ENCODE measurements at regions of chr21 and their contacts with region 1.

Region 1: DNA sequence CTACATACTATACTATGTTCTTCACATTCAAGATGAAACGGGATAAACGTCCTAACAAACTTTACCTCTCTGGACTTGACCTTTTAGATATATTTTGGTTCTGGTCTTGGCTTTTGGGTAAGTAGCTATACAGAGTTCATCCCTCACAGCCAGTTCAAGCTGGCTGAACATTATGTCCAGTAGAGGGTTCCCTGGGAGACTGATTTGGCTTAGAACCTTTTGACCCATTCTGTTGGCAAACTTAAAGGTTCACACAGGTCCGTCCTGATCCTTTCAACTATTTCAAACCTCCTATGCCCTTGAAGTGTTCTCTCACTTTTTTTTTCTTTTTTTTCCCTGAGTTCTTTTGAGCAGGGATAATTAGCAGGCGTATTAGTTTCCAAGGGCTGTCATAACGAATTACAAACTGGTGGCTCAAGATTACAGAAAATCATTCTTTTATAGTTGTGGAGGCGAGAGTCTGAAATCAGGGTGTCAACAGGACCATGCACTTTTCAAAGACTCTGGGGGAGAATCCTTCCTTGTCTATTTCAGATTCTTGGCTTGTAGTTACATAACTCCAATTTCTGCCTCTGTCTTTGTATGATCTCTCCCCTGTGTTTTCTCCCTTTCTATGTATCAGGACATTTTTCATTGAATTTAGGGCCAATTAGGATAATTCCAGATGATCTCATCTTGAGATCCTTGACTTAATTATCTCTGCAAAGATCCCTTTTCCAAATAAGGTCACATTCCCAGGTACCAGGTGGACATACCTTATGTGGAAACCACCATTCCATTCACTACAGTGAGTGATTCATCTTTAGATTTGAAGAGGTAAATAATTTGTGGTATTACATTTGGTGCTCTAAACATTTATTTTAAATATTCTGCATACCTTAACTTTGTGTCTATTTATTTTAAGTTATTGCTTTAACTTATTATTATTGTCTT is 257.4 kb upstream of the USP25 start:
- DNase-seq: no peak
- H3K4me3 ChIP-seq: no peak overlapping the region
- H3K27ac ChIP-seq: no peak overlapping the region
- H3K27me3 ChIP-seq: no peaks in the 10 kb centered on the region
- CTCF ChIP-seq: no peak

Region 2: GRCh38 chr21:14591882-14592281 is 880.5 kb before region 1 on chr21:
- CTCF ChIA-PET with region 1: interaction called, 10 read pairs
- POLR2A ChIA-PET with region 1: no interaction called
- DNase-seq: no peak
- H3K4me3 ChIP-seq: no peak overlapping the region
- H3K27ac ChIP-seq: no peak overlapping the region
- H3K27me3 ChIP-seq: no peaks in the 10 kb centered on the region
- CTCF ChIP-seq: no peak

Region 3: GRCh38 chr21:15192243-15192642 is 280.1 kb before region 1 on chr21:
- CTCF ChIA-PET with region 1: no interaction called
- POLR2A ChIA-PET with region 1: no interaction called
- DNase-seq: no peak
- H3K4me3 ChIP-seq: no peak overlapping the region
- H3K27ac ChIP-seq: no peak overlapping the region
- H3K27me3 ChIP-seq: no peaks in the 10 kb centered on the region
- CTCF ChIP-seq: no peak

Region 4: DNA sequence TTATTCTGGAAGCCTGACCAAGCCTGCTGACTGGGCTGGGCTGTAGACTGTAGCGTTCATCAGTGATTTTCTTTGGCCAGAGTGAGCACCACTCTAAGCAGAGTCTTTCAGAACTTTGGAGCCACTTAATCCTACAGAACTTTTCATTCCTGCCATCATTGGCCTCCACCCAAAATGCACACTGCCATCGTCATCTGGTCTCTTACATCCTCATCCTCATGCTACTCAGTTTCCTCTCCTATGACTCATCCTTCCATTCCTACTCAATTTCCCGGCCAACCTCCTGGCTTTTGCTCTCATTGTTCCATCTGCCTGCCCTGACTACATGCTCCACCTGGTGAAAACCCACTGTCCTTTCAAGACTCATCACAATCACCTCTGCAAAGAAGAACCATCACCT is 23.6 kb after region 1 on chr21:
- CTCF ChIA-PET with region 1: no interaction called
- POLR2A ChIA-PET with region 1: no interaction called
- DNase-seq: no peak
- H3K4me3 ChIP-seq: no peak overlapping the region
- H3K27ac ChIP-seq: no peak overlapping the region
- H3K27me3 ChIP-seq: no peaks in the 10 kb centered on the region
- CTCF ChIP-seq: no peak

Measured in AG04450 (cell line).